ENCODE measurements at regions of chr3 and their contacts with region 1.

Region 1: DNA sequence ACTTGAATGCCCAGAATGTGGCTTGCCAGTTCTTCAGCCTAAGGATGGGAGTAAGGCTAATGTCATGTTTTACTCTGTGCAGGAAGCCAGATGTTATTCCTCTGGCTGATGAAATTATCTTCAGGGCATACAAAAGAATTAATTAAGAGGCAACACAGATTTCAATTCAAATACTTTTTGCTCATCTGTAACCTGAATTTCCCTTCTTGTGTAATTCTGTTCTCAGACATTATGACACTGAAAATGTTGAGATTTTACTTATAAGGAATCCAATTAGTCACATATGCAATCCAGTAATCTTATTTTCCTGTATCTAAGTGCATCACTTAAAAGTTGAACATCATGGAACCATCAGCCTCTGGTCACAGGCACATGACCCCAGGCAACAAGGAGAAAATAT is 136.5 kb downstream of the CPNE4 start:
- DNase-seq: no peak
- ATAC-seq: no peak
- H3K4me3 ChIP-seq: no peak overlapping the region
- H3K27ac ChIP-seq: no peak overlapping the region
- H3K4me1 ChIP-seq: no peaks in the 10 kb centered on the region
- H3K27me3 ChIP-seq: peaks cover 0 to 3% (median 0%) of the 10 kb centered on the region in 7 donors
- CTCF ChIP-seq: no peak

Region 2: GRCh38 chr3:131948806-131949205 is 50.5 kb after region 1 on chr3:
- intact Hi-C with region 1: loop called in 1 of 10 experiments (anchors 2 kb)
- DNase-seq: no peak
- ATAC-seq: no peak
- H3K4me3 ChIP-seq: no peak overlapping the region
- H3K27ac ChIP-seq: no peak overlapping the region
- H3K4me1 ChIP-seq: no peaks in the 10 kb centered on the region
- H3K27me3 ChIP-seq: no peaks in the 10 kb centered on the region
- CTCF ChIP-seq: no peak

Region 3: GRCh38 chr3:132606085-132606484 is 707.7 kb after region 1 on chr3:
- intact Hi-C with region 1: no loop called
- DNase-seq: no peak
- ATAC-seq: peak in 4 of 8 donors; percentile 33 to 79 (median 56)
- H3K4me3 ChIP-seq: no peak overlapping the region
- H3K27ac ChIP-seq: peak overlapping the region in 3 of 10 donors; percentile 15 to 62 (median 31)
- H3K4me1 ChIP-seq: peaks cover 0 to 23% (median 6%) of the 10 kb centered on the region in 9 donors
- H3K27me3 ChIP-seq: no peaks in the 10 kb centered on the region
- CTCF ChIP-seq: no peak

Measured in heart right ventricle (tissue), 16 donors.